GM12878 (cell line): ENCODE measurements at regions of chr6 and their contacts with region 1.

Region 1: GRCh38 chr6:9412951-9413559 is 977.7 kb upstream of the SLC35B3 start:
- DNase-seq: no peak
- ATAC-seq: peak; percentile 97
- H3K4me3 ChIP-seq: no peak overlapping the region
- H3K27ac ChIP-seq: no peak overlapping the region
- H3K4me1 ChIP-seq: no peaks in the 10 kb centered on the region
- H3K27me3 ChIP-seq: no peaks in the 10 kb centered on the region
- CTCF ChIP-seq: peak; percentile 54 to 72 (median 61)
- EP300 ChIP-seq: no peak
- POLR2A ChIP-seq: no peak
- RAD21 ChIP-seq: peak; percentile 65

Region 2: GRCh38 chr6:8983188-8983688 is 429.8 kb before region 1 on chr6:
- CTCF ChIA-PET with region 1: interaction called, 6 read pairs
- POLR2A ChIA-PET with region 1: no interaction called
- RAD21 ChIA-PET with region 1: no interaction called
- SMC1A ChIA-PET with region 1: no interaction called
- in situ Hi-C with region 1: no loop called
- intact Hi-C with region 1: loop called (anchors 2 kb)
- DNase-seq: peak; percentile 4
- ATAC-seq: peak; percentile 98
- H3K4me3 ChIP-seq: no peak overlapping the region
- H3K27ac ChIP-seq: no peak overlapping the region
- H3K4me1 ChIP-seq: no peaks in the 10 kb centered on the region
- H3K27me3 ChIP-seq: no peaks in the 10 kb centered on the region
- CTCF ChIP-seq: peak; percentile 89 to 97 (median 93)
- EP300 ChIP-seq: no peak
- POLR2A ChIP-seq: no peak
- RAD21 ChIP-seq: peak; percentile 87

Region 3: DNA sequence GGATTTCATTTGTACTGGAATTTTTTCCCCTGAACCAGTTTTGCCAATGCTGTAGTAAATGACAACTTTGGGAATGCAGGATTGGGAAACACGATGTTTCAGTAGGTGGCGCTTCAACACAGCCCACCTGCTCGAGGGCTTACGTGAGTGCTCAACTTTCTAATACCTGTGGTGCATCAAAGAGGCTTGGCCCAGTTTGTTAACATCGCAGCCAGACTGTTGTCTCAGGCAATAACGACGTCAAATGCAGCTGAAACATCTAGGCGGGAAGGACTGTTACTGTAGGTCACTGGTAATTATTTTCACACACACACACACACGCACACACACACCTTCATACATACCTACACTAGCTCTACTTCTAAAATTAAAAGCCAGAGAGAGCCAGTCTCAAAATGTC is 162.2 kb before region 1 on chr6:
- CTCF ChIA-PET with region 1: interaction called, 6 read pairs
- POLR2A ChIA-PET with region 1: no interaction called
- RAD21 ChIA-PET with region 1: no interaction called
- SMC1A ChIA-PET with region 1: interaction called, 5 read pairs
- in situ Hi-C with region 1: no loop called
- intact Hi-C with region 1: loop called (anchors 1 kb)
- DNase-seq: no peak
- ATAC-seq: peak; percentile 49; the same call in 2 of the 3 replicates
- H3K4me3 ChIP-seq: no peak overlapping the region
- H3K27ac ChIP-seq: no peak overlapping the region
- H3K4me1 ChIP-seq: no peaks in the 10 kb centered on the region
- H3K27me3 ChIP-seq: no peaks in the 10 kb centered on the region
- CTCF ChIP-seq: peak; percentile 30 to 67 (median 43); a peak in 4 of 6 replicates
- EP300 ChIP-seq: no peak
- POLR2A ChIP-seq: no peak
- RAD21 ChIP-seq: peak; percentile 87

Region 4: GRCh38 chr6:9620263-9620662 is 207.2 kb after region 1 on chr6:
- CTCF ChIA-PET with region 1: no interaction called
- POLR2A ChIA-PET with region 1: no interaction called
- RAD21 ChIA-PET with region 1: no interaction called
- SMC1A ChIA-PET with region 1: no interaction called
- in situ Hi-C with region 1: no loop called
- intact Hi-C with region 1: no loop called
- DNase-seq: no peak
- ATAC-seq: peak; percentile 76
- H3K4me3 ChIP-seq: no peak overlapping the region
- H3K27ac ChIP-seq: no peak overlapping the region
- H3K4me1 ChIP-seq: no peaks in the 10 kb centered on the region
- H3K27me3 ChIP-seq: no peaks in the 10 kb centered on the region
- CTCF ChIP-seq: no peak
- EP300 ChIP-seq: no peak
- POLR2A ChIP-seq: no peak
- RAD21 ChIP-seq: no peak